ENCODE measurements at regions of chr13 and their contacts with region 1.

Region 1: GRCh38 chr13:75691183-75691582 is 55.1 kb downstream of the LMO7 start:
- DNase-seq: no peak

Region 2: DNA sequence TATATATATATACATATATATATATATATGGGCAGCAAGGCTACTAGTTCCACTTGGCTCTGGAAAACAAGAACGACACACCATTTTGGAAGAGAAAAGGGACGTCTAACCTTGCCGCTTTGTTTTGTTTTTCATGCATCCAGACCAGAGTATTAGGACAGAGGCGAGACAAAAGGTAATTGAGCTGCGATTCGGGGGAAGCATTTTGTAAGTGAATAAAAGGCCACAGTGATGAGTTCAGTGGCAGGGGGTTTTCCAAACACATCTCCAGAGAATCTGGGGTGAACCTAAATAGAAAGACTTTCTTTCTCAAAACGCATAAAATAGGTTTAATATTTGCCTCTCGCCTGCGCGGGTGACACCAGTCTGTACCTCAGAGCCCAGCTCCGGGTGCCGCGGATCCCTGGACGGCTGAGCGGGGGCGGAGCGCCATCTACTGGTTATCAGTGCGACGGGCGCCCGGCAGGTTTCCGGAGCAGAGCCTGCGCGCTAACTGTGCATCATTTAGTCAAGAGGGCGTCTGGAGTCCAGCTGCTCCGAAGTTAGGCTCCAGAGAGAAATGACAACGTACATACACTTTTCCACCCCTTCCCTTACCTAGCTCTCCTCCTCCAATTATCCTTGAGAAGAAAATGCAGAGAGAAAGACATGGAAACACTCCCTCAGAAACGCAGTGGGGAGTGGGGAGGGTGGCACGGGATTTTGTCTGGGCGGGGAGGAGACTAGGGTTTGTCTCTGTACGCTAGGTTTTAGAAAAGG is 471.5 kb before region 1 on chr13:
- intact Hi-C with region 1: no loop called
- DNase-seq: peak; percentile 88

Region 3: GRCh38 chr13:75803164-75803611 is 112.0 kb after region 1 on chr13:
- intact Hi-C with region 1: loop called (anchors 5 kb)
- DNase-seq: no peak

Region 4: DNA sequence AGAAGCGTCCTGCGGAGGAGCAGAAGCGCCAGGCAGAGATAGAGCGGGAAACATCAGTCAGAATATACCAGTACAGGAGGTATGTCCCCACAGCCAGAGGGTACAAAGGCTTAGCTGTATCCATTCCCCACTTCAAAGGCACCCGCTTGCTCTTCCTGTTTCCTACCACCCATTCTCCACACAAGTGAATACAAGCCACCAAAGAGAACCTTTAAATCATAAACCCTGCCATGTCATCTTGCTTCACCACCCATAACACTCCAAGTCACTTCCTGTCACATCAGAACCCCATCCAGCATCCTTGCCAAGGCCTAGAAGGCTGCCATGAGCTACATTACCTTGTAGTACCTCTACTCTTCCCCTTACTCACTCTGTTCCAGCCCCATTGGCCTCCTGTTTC is 150.7 kb after region 1 on chr13:
- intact Hi-C with region 1: loop called (anchors 5 kb)
- DNase-seq: no peak

Region 5: GRCh38 chr13:75864718-75865117 is 173.5 kb after region 1 on chr13:
- intact Hi-C with region 1: loop called (anchors 10 kb)
- DNase-seq: no peak

Region 6: GRCh38 chr13:76473552-76474134 is 782.5 kb after region 1 on chr13:
- intact Hi-C with region 1: loop called (anchors 10 kb)
- DNase-seq: peak; percentile 79